Heart left ventricle (tissue), 16 donors: ENCODE measurements at regions of chr6 and their contacts with region 1.

Region 1: DNA sequence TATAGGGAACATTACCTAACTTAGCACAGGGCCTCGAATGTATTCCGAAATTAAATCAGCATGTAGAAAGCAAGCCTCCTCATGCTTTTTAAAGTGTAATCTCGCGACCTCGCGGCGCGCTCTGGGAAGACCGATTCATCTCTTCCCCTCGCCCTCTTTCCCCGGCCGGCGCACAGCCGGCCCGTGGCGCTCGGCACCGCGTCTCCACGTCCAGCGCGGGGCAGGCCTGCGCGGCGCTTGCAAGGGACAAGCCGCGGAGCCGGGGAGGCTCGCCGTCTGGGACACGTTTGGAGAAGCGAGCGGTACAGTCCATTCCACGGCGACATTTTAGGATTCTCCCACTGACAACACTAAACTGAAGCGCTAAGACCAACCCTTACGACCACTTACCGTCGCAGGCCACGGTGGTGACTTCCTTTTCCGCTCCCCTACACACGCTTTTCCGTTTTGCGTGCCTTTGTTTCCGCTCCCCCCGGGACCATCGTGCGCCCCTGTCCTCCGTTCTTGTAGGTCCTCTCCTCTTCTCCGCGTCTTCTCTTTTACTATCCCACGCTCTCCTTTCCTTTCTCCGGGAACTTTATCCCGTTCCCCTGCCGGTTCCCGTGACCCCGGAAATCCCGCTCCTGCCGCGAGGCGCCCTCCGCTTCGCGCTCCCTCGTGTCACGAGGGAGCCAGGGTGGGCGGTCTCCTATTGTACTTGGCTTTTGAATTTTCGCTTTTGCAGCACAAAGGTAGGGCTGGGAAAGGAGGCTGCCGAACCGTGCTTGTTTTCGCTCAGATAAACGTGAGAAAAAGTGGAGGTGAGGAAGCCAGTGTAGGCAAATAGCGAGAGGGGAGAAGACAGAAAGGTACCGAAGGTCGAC is at the start of gene ECHDC1:
- DNase-seq: peak; percentile 58 to 80 (median 65)
- ATAC-seq: peak; percentile 60 to 90 (median 88)
- H3K4me3 ChIP-seq: peak within 1 kb of the TSS; percentile 66 to 84 (median 78)
- H3K27ac ChIP-seq: peak within 1 kb of the TSS; percentile 31 to 89 (median 78)
- H3K4me1 ChIP-seq: peaks cover 0 to 56% (median 27%) of the 10 kb centered on the region in 12 donors
- H3K27me3 ChIP-seq: no peaks in the 10 kb centered on the region
- CTCF ChIP-seq: peak in 1 of 12 donors; percentile 23
- POLR2A ChIP-seq: peak in 1 of 2 donors; percentile 36
- total RNA-seq, gene ECHDC1: 29.8 to 51.3 (median 35.2) TPM

Region 2: DNA sequence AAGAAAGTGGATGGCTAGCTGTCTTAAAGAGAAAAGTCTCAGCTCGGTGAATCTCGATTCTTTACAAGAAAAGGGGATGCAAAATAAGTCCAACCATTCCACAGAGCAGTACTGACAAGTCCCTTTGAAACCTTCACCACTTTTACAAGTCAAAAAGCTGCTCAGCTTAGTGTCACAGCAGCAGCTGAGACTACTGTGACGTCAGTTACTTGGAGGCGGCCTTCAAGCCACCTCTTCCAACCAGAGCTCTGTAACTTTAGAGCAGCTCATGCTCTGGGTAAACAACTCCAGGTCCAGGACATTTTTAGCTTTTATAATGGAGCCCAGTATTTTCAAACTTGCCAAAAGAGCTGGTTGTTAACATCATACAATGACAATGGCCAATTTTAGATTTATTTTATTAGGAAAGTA is 116.1 kb after region 1 on chr6 and contains the start of gene KIAA0408:
- intact Hi-C with region 1: loop called in 1 of 10 experiments (anchors 5 kb)
- DNase-seq: peak; percentile 54 to 68 (median 61)
- ATAC-seq: peak; percentile 87 to 93 (median 90)
- H3K4me3 ChIP-seq: peak within 1 kb of the TSS in 8 of 12 donors; percentile 14 to 53 (median 30)
- H3K27ac ChIP-seq: peak within 1 kb of the TSS; percentile 11 to 82 (median 66)
- H3K4me1 ChIP-seq: peaks cover 0 to 13% (median 0%) of the 10 kb centered on the region in 12 donors
- H3K27me3 ChIP-seq: no peaks in the 10 kb centered on the region
- CTCF ChIP-seq: no peak
- POLR2A ChIP-seq: peak in 1 of 2 donors; percentile 31
- total RNA-seq, gene KIAA0408: 0.28 to 3.3 (median 1.2) TPM